Prostate gland (tissue), 2 donors: ENCODE measurements at regions of chr16 and their contacts with region 1.

Region 1: DNA sequence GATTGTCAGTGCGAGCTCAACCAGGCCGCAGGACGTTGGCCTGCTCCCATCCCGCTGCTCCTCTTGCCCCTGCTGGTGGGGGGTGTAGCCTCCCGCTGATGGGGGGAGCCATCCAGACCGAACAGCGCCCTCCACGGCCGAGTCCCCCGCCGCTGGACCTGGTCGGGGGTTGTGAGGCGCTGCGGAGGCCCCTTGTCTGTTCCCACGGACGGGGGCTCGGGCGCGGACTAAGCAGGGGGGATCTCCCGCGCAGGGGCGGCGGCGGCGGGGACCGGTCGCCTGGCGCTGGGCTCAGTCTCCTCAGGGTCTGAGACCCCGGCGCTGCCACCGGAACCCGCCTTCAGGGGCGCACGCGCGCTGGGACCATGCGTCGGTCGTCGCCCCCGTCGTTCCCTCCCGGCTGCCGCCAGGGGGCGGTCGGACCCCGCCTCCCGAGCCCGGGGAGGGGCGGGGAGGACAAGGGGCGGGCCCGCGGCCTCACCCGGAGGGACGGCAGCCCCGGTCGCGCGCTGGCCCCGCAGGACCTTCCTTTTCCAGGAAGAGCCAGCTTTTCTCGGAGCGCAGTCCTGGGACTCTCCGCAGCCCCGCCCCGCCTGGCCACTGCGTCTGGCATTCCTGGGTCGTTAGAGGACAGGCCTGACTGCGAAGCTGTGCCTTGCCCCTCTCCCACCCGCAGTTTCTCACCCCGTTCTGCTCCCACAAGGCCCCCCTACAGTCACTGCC is 6.3 kb upstream of the IL32 start:
- DNase-seq: peak; percentile 72
- H3K4me3 ChIP-seq: peak overlapping the region; percentile 92 to 93
- H3K27ac ChIP-seq: peak overlapping the region; percentile 74 to 76
- H3K4me1 ChIP-seq: peaks cover 7% of the 10 kb centered on the region
- H3K27me3 ChIP-seq: no peaks in the 10 kb centered on the region
- CTCF ChIP-seq: peak; percentile 86 to 98 (median 97)
- POLR2A ChIP-seq: peak; percentile 19

Region 2: DNA sequence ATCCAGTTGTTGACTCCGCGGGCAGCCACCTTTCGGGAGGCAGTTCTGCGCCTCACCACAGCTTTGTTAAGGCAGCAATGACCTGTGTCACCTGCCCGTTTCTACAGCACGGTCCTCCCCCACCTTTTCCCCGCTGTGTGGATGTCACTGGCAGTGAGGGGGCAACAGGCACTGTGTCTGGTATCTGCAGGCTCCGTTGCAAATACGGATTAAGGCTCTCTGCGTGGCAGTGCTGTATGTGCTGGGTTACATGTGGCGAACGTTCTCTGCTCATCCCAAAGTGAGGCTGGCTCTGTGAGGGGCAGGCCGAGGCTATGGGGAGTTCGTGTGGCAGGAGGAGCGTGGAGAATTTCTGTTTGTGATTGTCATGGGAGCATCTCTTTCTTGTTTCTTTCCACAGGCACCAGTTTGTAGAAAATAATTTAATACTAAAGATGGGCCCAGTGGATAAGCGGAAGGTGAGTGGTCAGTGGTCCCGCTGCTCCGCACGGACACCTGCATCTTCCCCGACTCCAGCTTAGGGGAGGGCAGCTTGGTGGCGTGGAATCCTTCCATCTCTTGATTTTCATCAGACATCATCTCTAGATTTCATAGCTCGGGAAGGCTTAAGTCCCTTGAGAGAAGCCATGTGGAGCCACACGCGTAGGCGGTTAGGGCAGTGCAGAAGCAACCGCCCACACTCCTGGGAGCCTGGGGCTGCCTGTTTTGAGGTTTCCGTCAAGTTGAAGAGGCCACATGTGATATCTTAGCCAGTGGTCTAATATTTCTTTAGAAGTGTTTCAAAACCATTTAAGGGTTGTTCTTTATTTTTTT is 463.6 kb before region 1 on chr16:
- intact Hi-C with region 1: no loop called
- DNase-seq: no peak
- H3K4me3 ChIP-seq: no peak overlapping the region
- H3K27ac ChIP-seq: no peak overlapping the region
- H3K4me1 ChIP-seq: no peaks in the 10 kb centered on the region
- H3K27me3 ChIP-seq: no peaks in the 10 kb centered on the region
- CTCF ChIP-seq: no peak
- POLR2A ChIP-seq: no peak

Region 3: DNA sequence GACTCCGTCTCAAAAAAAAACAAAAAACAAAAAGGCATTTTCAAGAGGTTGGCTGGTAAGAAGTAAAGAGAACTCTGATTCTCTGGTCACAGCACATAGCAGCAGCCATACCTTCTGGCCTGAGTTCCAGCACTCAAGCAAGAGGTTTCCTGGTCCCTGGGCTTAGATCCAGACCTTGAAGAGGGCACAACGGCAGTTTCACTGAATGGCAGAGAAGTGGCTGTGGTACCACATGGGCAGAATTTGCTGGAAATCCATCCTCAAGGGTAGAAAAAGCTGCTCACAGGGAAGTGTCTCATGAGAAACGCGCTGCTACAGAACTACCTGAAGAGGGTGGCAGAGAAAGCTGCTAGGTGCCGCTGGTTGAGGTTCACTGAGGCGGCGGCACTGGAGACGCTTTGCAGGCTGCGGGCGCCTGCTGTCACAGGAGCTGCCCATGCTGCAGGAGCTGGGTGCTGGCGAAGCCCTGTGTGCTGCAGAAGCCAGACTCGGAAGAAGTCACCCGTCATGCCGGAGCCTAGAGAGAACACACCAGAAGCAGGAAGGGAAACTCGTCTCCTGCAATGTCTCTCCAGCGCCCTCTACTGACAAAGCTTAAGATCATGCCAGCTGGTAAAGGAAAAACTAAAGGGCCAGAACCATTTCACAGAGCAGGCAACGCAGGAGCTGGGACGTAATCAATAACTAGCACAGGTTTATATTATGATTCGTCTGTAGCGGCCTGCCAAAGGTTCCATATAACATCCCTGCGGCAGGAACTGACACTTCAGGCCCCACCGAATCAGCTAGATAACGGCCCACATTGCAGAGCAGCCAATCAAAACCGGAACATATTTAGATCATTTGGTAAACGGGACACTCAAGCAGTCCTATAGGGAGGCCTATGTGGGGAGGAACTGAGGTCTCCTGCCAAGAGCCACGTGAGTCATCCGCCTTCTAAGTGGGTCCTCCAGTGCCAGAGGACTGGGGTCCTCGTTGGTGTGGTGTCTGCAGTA is 70.3 kb after region 1 on chr16:
- intact Hi-C with region 1: loop called (anchors 5 kb)
- DNase-seq: peak; percentile 76
- H3K4me3 ChIP-seq: peak overlapping the region; percentile 17 to 35
- H3K27ac ChIP-seq: peak overlapping the region; percentile 46 to 55
- H3K4me1 ChIP-seq: peaks cover 4% of the 10 kb centered on the region
- H3K27me3 ChIP-seq: no peaks in the 10 kb centered on the region
- CTCF ChIP-seq: peak; percentile 75 to 90 (median 84)
- POLR2A ChIP-seq: no peak

Region 4: GRCh38 chr16:3166510-3166895 is 107.3 kb after region 1 on chr16:
- intact Hi-C with region 1: loop called (anchors 2 kb)
- DNase-seq: no peak
- H3K4me3 ChIP-seq: no peak overlapping the region
- H3K27ac ChIP-seq: no peak overlapping the region
- H3K4me1 ChIP-seq: peaks cover 6% of the 10 kb centered on the region
- H3K27me3 ChIP-seq: peaks cover 6% of the 10 kb centered on the region
- CTCF ChIP-seq: no peak
- POLR2A ChIP-seq: no peak

Region 5: GRCh38 chr16:3317315-3317999 is 258.3 kb after region 1 on chr16:
- intact Hi-C with region 1: no loop called
- DNase-seq: no peak
- H3K4me3 ChIP-seq: no peak overlapping the region
- H3K27ac ChIP-seq: no peak overlapping the region
- H3K4me1 ChIP-seq: no peaks in the 10 kb centered on the region
- H3K27me3 ChIP-seq: no peaks in the 10 kb centered on the region
- CTCF ChIP-seq: no peak
- POLR2A ChIP-seq: no peak